HepG2 (cell line): ENCODE measurements at regions of chr1 and their contacts with region 1.

Region 1: GRCh38 chr1:1906185-1907097 is 8.6 kb upstream of the CALML6 start:
- DNase-seq: peak; percentile 79
- ATAC-seq: peak; percentile 84
- H3K4me3 ChIP-seq: no peak overlapping the region
- H3K27ac ChIP-seq: no peak overlapping the region
- H3K4me1 ChIP-seq: peaks cover 53% of the 10 kb centered on the region
- H3K27me3 ChIP-seq: peaks cover 0 to 11% of the 10 kb centered on the region in 2 experiments; a peak in 4 of 5 replicates
- CTCF ChIP-seq: peak; percentile 98
- EP300 ChIP-seq: no peak
- POLR2A ChIP-seq: no peak
- RAD21 ChIP-seq: peak; percentile 93

Region 2: GRCh38 chr1:1777950-1778662 is 128.3 kb before region 1 on chr1 and contains the start of gene NADK:
- CTCF ChIA-PET with region 1: interaction called, 4 read pairs
- POLR2A ChIA-PET with region 1: interaction called, 8 read pairs
- in situ Hi-C with region 1: loop called (anchors 10 kb)
- intact Hi-C with region 1: loop called (anchors 5 kb)
- DNase-seq: no peak
- ATAC-seq: peak; percentile 9
- H3K4me3 ChIP-seq: peak within 1 kb of the TSS; percentile 71 to 95 (median 92)
- H3K27ac ChIP-seq: peak within 1 kb of the TSS; percentile 90
- H3K4me1 ChIP-seq: peaks cover 71% of the 10 kb centered on the region
- H3K27me3 ChIP-seq: no peaks in the 10 kb centered on the region
- CTCF ChIP-seq: 0 out of 2 replicates have a peak, but pooled peaks have one; percentile 12
- EP300 ChIP-seq: no peak
- POLR2A ChIP-seq: peak in 1 of 2 experiments; percentile 1; a peak in 1 of 4 replicates
- RAD21 ChIP-seq: peak; percentile 43
- total RNA-seq, gene NADK: 47.6 and 60.1 TPM in 2 replicates

Region 3: GRCh38 chr1:1833916-1834325 is 72.5 kb before region 1 on chr1:
- CTCF ChIA-PET with region 1: no interaction called
- POLR2A ChIA-PET with region 1: no interaction called
- in situ Hi-C with region 1: no loop called
- intact Hi-C with region 1: no loop called
- DNase-seq: peak; percentile 82
- ATAC-seq: peak; percentile 73
- H3K4me3 ChIP-seq: peak overlapping the region in 1 of 3 experiments; percentile 19; a peak in 1 of 6 replicates
- H3K27ac ChIP-seq: peak overlapping the region; percentile 45
- H3K4me1 ChIP-seq: peaks cover 44% of the 10 kb centered on the region
- H3K27me3 ChIP-seq: no peaks in the 10 kb centered on the region
- CTCF ChIP-seq: no peak
- EP300 ChIP-seq: peak in 1 of 2 experiments; percentile 25; a peak in 1 of 4 replicates
- POLR2A ChIP-seq: no peak
- RAD21 ChIP-seq: no peak

Region 4: GRCh38 chr1:1858382-1859086 is 47.9 kb before region 1 on chr1:
- CTCF ChIA-PET with region 1: no interaction called
- POLR2A ChIA-PET with region 1: no interaction called
- in situ Hi-C with region 1: no loop called
- intact Hi-C with region 1: loop called (anchors 10 kb)
- DNase-seq: peak; percentile 62
- ATAC-seq: peak; percentile 10; the same call in 1 of the 3 replicates
- H3K4me3 ChIP-seq: no peak overlapping the region
- H3K27ac ChIP-seq: peak overlapping the region; percentile 53
- H3K4me1 ChIP-seq: peaks cover 81% of the 10 kb centered on the region
- H3K27me3 ChIP-seq: no peaks in the 10 kb centered on the region
- CTCF ChIP-seq: peak; percentile 61
- EP300 ChIP-seq: no peak
- POLR2A ChIP-seq: no peak
- RAD21 ChIP-seq: no peak

Region 5: GRCh38 chr1:1919304-1920056 is 13.0 kb after region 1 on chr1:
- CTCF ChIA-PET with region 1: interaction called, 3 read pairs
- POLR2A ChIA-PET with region 1: interaction called, 18 read pairs
- in situ Hi-C with region 1: no loop called
- intact Hi-C with region 1: no loop called
- DNase-seq: peak; percentile 96
- ATAC-seq: peak; percentile 65
- H3K4me3 ChIP-seq: peak overlapping the region; percentile 49 to 75 (median 59); a peak in 5 of 6 replicates
- H3K27ac ChIP-seq: peak overlapping the region; percentile 70
- H3K4me1 ChIP-seq: peaks cover 65% of the 10 kb centered on the region
- H3K27me3 ChIP-seq: peaks cover 6 to 10% of the 10 kb centered on the region in 2 experiments; a peak in 4 of 5 replicates
- CTCF ChIP-seq: peak; percentile 31
- EP300 ChIP-seq: no peak
- POLR2A ChIP-seq: no peak
- RAD21 ChIP-seq: no peak

Region 6: GRCh38 chr1:1943834-1944570 is 37.6 kb after region 1 on chr1:
- CTCF ChIA-PET with region 1: no interaction called
- POLR2A ChIA-PET with region 1: interaction called, 21 read pairs
- in situ Hi-C with region 1: no loop called
- intact Hi-C with region 1: no loop called
- DNase-seq: peak; percentile 61
- ATAC-seq: peak; percentile 77
- H3K4me3 ChIP-seq: peak overlapping the region; percentile 67 to 87 (median 67)
- H3K27ac ChIP-seq: peak overlapping the region; percentile 91
- H3K4me1 ChIP-seq: peaks cover 80% of the 10 kb centered on the region
- H3K27me3 ChIP-seq: no peaks in the 10 kb centered on the region
- CTCF ChIP-seq: peak; percentile 100
- EP300 ChIP-seq: no peak
- POLR2A ChIP-seq: no peak
- RAD21 ChIP-seq: peak; percentile 70

Region 7: GRCh38 chr1:2049718-2050427 is 143.4 kb after region 1 on chr1 and contains the start of gene PRKCZ:
- CTCF ChIA-PET with region 1: interaction called, 3 read pairs
- POLR2A ChIA-PET with region 1: interaction called, 7 read pairs
- in situ Hi-C with region 1: no loop called
- intact Hi-C with region 1: loop called (anchors 1 kb)
- DNase-seq: peak; percentile 84
- ATAC-seq: peak; percentile 59
- H3K4me3 ChIP-seq: peak within 1 kb of the TSS; percentile 80 to 90 (median 89)
- H3K27ac ChIP-seq: peak within 1 kb of the TSS; percentile 99
- H3K4me1 ChIP-seq: peaks cover 68% of the 10 kb centered on the region
- H3K27me3 ChIP-seq: peaks cover 2 to 8% of the 10 kb centered on the region in 2 experiments; a peak in 1 of 5 replicates
- CTCF ChIP-seq: no peak
- EP300 ChIP-seq: peak in 1 of 2 experiments; percentile 34; a peak in 1 of 4 replicates
- POLR2A ChIP-seq: peak in 1 of 2 experiments; percentile 71; a peak in 2 of 4 replicates
- RAD21 ChIP-seq: 0 out of 2 replicates have a peak, but pooled peaks have one; percentile 17
- total RNA-seq, gene PRKCZ: 21.9 and 34.7 TPM in 2 replicates

Region 8: DNA sequence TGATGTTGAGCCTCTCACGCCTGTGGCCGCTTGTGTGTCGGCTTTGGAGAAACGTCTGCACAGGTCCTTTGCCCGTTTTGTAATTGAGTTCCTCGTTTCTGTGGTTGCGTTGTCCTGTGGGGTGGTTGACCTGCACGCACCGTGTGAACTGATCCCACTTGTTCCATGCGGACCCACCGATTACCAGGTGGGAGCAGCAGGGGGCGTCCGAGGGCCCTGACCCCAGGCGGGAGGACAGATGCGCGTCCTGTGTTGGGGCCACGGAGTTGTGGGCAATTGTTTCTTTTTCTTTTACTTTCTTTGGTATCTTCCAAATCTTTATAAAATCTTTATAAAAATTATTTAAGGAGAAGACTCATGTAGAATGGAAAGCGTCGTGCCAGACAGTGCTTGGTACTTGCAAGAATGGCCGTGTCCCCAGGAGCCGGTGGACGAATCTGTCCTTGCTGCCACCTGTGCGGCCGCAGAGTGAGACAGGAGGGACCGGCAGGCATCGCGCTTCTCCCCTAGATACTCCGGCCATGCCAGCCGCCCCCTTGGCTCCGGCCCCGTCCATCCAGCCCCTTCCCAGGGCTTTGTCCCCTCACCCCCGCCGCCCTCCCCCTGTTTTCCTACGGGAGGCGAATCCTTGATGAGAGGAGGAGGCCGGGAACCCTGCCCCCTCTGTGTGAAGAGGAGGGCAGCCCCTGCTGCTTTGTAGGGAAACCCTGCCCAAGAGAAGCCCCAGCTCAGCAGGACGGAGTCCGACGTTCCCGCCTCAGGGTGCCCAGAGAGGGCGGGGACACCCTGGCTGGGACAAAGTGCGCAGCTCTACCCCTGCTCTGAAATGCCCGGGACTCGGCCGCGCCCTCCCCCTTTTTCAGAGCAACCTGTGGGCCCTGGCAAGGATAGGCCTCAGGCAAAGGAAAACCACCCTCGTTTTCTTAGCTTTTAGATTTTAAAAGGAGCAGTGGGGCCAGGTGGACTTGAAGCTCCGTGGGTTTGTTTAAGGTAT is 185.5 kb after region 1 on chr1:
- CTCF ChIA-PET with region 1: no interaction called
- POLR2A ChIA-PET with region 1: no interaction called
- in situ Hi-C with region 1: no loop called
- intact Hi-C with region 1: no loop called
- DNase-seq: peak; percentile 18
- ATAC-seq: peak; percentile 56
- H3K4me3 ChIP-seq: no peak overlapping the region
- H3K27ac ChIP-seq: no peak overlapping the region
- H3K4me1 ChIP-seq: peaks cover 13% of the 10 kb centered on the region; the same call in 1 of the 2 replicates
- H3K27me3 ChIP-seq: no peaks in the 10 kb centered on the region
- CTCF ChIP-seq: peak; percentile 73
- EP300 ChIP-seq: no peak
- POLR2A ChIP-seq: no peak
- RAD21 ChIP-seq: peak; percentile 51